ENCODE measurements at regions of chr20 and their contacts with region 1.

Region 1: GRCh38 chr20:50509935-50510705 is at the start of gene PTPN1:
- DNase-seq: peak; percentile 99
- ATAC-seq: peak; percentile 96
- total RNA-seq, gene PTPN1: 24.1 TPM

Region 2: DNA sequence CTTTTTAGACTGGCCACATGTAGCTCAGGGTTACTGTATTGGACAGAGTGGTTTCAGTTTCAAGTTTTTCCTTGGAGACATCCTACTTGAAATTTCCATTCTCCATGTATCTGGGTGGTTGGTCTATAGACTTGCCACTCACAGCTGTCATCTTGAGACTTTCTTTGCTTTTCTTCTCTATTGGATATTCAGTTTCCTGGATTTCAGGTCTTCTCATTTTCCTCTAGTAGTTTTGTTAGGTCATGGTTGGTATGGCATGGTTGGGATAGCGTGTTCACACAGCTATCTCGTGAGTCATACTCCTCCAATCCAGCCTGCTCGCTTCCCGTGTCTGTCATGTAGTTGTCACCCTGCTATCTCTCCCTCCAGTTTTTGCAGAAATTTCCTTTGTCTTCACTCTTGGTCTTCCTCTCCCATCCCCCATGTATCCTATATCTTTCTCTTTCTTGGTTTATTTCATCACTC is 48.4 kb after region 1 on chr20:
- intact Hi-C with region 1: no loop called
- DNase-seq: no peak
- ATAC-seq: no peak

Region 3: DNA sequence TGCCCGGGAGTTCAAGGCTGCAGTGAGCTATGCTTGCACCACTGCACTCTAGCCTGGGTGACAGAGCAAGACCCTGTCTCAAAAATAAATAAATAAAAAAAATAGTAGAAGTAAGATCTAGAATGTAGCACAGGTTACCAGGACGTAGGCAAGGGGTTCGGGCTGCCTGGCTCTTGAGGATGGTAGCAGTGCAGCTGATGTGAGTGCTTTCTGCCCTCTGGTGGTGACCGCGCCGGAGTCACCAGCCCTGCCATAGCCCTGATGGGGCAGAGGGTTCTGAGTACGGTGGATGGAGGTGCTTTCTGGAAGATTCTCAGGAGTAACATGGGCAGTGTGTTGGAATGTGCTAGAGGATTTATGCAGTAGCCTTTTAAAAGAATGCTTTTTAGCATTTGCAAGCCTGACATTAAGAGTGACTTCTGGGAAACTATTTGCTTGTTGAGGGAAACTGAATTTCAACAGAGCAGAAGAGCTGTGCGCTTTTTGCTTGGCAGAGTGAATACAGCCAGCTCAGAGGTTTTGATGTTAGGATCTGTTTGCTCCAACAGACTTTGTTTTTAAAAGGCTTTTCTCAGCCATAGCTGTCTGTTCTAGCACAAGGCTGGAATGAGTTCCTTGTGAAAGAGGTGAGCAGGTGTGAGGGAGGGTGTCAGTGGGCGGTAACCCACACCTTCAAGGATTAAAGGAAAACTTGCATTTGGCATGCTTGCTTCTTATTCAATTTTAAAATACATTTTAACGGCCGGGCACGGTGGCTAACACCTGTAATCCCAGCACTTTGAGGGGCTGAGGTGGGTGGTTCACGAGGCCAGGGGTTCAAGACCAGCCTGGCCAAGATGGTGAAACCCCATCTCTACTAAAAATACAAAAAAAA is 66.0 kb after region 1 on chr20:
- intact Hi-C with region 1: loop called (anchors 10 kb)
- DNase-seq: peak; percentile 85
- ATAC-seq: peak; percentile 61

Measured in left ventricle myocardium superior (tissue), 1 donor.